ENCODE measurements at regions of chr3 and their contacts with region 1.

Region 1: DNA sequence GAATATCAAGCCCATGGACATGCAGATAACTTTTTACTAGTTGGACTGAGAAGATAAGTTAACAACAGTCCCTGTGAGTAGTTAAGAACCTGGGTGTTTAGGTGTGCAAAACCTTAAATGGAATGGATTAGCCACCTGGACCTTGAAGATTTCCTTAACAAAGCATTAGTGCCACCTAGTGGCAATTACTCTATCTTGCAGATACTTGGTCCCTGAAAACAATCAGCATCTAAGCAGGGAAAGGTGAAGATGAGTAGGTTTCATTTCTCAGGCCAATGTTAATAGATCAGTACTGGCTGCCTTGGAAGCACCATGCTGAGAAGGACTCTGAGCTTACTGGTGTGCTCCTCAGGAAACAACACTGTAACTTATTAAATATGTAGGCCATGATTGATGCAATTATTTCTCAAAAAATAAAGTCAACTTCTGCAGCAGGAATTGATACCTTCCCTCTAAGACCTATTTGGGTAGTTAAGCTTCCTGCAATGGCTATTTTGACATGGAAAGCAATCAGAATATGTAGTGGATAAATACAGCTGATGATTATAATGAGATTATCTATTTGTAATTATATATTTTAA is 329.4 kb downstream of the TBC1D5 start:
- DNase-seq: peak; percentile 33
- CTCF ChIP-seq: peak; percentile 68

Region 2: DNA sequence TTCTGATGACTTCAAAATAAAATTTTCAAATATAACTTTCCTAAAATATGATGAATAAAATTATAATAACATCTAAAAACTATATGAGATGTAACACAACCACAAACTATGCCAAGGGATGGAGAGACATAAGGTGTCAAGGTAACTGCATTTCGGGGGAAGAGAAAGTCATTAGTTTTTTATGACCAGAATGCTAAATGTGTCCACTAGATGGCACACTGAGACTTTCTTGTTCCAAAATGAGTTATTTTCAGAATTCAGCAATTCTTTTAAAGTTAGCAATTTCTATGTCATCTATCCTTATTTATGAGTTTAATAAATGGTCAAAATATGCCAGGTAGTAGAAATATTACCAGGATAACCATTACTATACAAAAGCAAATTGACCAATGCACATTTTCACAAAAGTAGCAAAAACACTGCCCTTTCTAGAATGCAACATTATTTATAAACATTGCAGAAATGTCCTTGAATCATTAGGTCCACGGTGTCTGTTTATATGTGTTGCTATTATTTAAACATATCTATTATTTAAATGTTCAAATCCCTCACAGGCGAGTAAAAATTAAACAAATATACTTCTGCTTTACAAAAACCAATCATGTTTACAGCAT is 154.1 kb before region 1 on chr3:
- CTCF ChIA-PET with region 1: interaction called, 17 read pairs
- POLR2A ChIA-PET with region 1: no interaction called
- DNase-seq: peak; percentile 45
- CTCF ChIP-seq: peak; percentile 72

Region 3: GRCh38 chr3:17398959-17399551 is 14.0 kb before region 1 on chr3:
- CTCF ChIA-PET with region 1: interaction called, 20 read pairs
- POLR2A ChIA-PET with region 1: no interaction called
- DNase-seq: peak; percentile 13
- CTCF ChIP-seq: no peak

Region 4: GRCh38 chr3:17423786-17424536 is 10.9 kb after region 1 on chr3:
- CTCF ChIA-PET with region 1: interaction called, 18 read pairs
- POLR2A ChIA-PET with region 1: no interaction called
- DNase-seq: peak; percentile 10
- CTCF ChIP-seq: no peak

Region 5: GRCh38 chr3:17535274-17535673 is 122.2 kb after region 1 on chr3:
- CTCF ChIA-PET with region 1: no interaction called
- POLR2A ChIA-PET with region 1: no interaction called
- DNase-seq: no peak
- CTCF ChIP-seq: no peak

Measured in GM10248 (cell line).